Activated CD8-positive, alpha-beta memory T cell treated with anti-CD3 and anti-CD28 coated beads, Interleukin-2, amount 10 ng/mL, durations not matched to agents 7 days and 5 days (primary cell): ENCODE measurements at regions of chr1 and their contacts with region 1.

Region 1: GRCh38 chr1:39189592-39190041 is 14.9 kb upstream of the MACF1 start:
- DNase-seq: no peak
- ATAC-seq: no peak
- H3K4me3 Mint-ChIP-seq: no peak overlapping the region
- H3K27ac Mint-ChIP-seq: peak overlapping the region; percentile 64
- H3K4me1 Mint-ChIP-seq: peaks cover 81% of the 10 kb centered on the region
- H3K27me3 Mint-ChIP-seq: no peaks in the 10 kb centered on the region

Region 2: DNA sequence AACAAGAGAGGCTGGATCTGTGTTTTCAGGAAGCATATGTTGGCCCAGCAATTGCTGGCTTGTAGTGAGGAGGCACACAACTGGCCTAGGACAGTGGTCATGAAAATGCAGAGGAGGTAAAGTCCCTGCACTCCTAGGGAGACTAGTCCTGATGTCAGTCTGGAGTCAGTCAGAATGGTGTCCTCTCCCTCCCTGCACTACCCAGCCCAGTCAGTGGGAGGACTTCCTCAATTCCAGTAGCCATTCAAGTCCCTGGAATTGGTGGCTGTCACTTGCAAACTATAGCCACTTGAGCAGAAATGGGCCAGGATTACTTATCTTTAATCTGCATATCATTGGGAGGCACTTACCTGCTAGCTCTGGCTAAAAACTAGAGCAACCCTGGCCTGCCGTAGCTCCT is 144.9 kb before region 1 on chr1:
- CTCF ChIA-PET with region 1: no interaction called
- DNase-seq: no peak
- ATAC-seq: no peak
- H3K4me3 Mint-ChIP-seq: no peak overlapping the region
- H3K27ac Mint-ChIP-seq: no peak overlapping the region
- H3K4me1 Mint-ChIP-seq: peaks cover under 1% of the 10 kb centered on the region
- H3K27me3 Mint-ChIP-seq: no peaks in the 10 kb centered on the region

Region 3: GRCh38 chr1:39332291-39332690 is 142.7 kb after region 1 on chr1:
- CTCF ChIA-PET with region 1: interaction called, 17 read pairs
- DNase-seq: no peak
- ATAC-seq: no peak
- H3K4me3 Mint-ChIP-seq: peak overlapping the region; percentile 12
- H3K27ac Mint-ChIP-seq: peak overlapping the region; percentile 78
- H3K4me1 Mint-ChIP-seq: peaks cover 81% of the 10 kb centered on the region
- H3K27me3 Mint-ChIP-seq: no peaks in the 10 kb centered on the region